Activated CD8-positive, alpha-beta T cell treated with anti-CD3 and anti-CD28 coated beads, Interleukin-2, amount 10 ng/mL, durations not matched to agents 7 days and 5 days (primary cell): ENCODE measurements at regions of chr22 and their contacts with region 1.

Region 1: DNA sequence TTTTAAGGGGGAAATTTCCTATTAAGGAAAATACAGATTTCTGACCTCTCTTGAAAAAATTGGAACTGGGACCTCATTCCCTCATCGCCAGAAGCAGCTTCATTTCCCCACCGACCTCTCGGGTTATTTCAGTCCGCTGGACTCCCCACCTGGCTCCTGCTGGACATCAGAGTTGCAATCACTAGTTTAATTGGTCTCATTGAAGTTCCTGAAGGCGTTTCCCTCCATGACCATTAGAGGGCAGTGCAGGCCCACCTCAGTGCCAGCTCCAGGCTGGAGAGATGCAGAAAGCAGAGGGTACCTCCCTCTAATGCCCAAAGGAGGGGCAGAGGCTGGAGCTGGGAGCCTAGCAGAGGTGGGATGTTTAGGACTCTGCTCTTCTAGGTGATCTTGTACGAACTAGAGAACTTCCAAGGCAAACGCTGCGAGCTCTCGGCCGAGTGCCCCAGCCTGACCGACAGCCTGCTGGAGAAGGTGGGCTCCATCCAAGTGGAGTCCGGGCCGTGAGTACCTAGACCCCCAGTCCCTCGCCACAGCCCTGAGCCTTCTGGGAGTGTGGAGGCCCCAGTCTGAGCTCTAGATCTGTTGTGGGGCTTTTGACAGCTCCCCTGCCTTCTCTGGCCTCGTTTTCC is 2.7 kb downstream of the CRYBB3 start:
- DNase-seq: peak; percentile 70
- ATAC-seq: peak; percentile 68
- H3K4me3 Mint-ChIP-seq: no peak overlapping the region
- H3K27ac Mint-ChIP-seq: no peak overlapping the region
- H3K4me1 Mint-ChIP-seq: peaks cover 19% of the 10 kb centered on the region
- H3K27me3 Mint-ChIP-seq: no peaks in the 10 kb centered on the region

Region 2: GRCh38 chr22:25076336-25076735 is 126.1 kb before region 1 on chr22:
- CTCF ChIA-PET with region 1: interaction called, 16 read pairs
- POLR2A ChIA-PET with region 1: no interaction called
- DNase-seq: peak; percentile 45
- ATAC-seq: peak; percentile 67
- H3K4me3 Mint-ChIP-seq: peak overlapping the region; percentile 60
- H3K27ac Mint-ChIP-seq: peak overlapping the region; percentile 82
- H3K4me1 Mint-ChIP-seq: peaks cover 63% of the 10 kb centered on the region
- H3K27me3 Mint-ChIP-seq: no peaks in the 10 kb centered on the region

Region 3: GRCh38 chr22:25148149-25148691 is 54.2 kb before region 1 on chr22:
- CTCF ChIA-PET with region 1: no interaction called
- POLR2A ChIA-PET with region 1: no interaction called
- DNase-seq: no peak
- ATAC-seq: no peak
- H3K4me3 Mint-ChIP-seq: no peak overlapping the region
- H3K27ac Mint-ChIP-seq: no peak overlapping the region
- H3K4me1 Mint-ChIP-seq: no peaks in the 10 kb centered on the region
- H3K27me3 Mint-ChIP-seq: no peaks in the 10 kb centered on the region